Sigmoid colon (tissue), 7 donors: ENCODE measurements at regions of chr5 and their contacts with region 1.

Region 1: DNA sequence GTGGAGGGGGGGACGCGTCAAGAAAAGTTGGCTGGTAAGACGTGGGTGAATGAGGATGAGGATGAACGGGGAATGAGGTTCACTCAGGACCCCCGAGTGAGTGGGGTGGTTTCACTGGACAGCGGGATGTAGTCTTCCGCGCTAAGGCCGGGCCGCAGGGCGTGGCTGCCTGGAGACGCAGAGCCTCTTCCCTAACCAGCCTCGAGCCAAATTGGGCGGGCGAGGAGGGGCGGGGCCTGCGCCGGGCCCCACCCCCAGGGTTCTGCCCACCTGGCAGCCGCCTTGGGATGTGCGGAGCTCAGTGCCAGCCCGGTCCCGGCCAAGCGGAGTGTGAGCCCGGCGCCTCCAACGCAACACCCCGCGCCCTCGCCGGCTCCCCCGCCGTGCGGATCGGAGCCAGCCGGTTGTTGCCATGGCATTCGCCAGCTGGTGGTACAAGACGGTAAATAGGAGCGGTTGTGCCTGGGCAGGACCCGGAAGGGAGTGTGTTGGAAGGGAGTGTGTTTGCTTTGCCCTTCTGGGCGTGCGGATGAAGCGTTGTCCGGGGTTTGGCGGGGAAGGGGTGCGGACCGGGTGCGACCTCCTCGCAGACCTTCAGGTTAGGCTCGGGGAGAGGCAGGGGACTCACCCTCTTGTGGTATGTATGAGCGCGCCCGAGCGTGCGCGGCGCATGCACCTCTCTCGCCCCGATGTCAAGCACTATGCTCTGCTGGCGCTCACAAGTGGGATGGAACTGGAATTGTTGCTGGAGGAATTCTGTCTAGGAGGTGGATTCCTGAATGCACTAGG is 743 bp downstream of the CAST start:
- DNase-seq: peak; percentile 97
- H3K4me3 ChIP-seq: peak overlapping the region; percentile 92 to 98 (median 94)
- H3K27ac ChIP-seq: peak overlapping the region; percentile 99 to 100 (median 100)
- H3K4me1 ChIP-seq: peaks cover 0 to 44% (median 19%) of the 10 kb centered on the region in 4 donors
- H3K27me3 ChIP-seq: no peaks in the 10 kb centered on the region
- CTCF ChIP-seq: no peak
- EP300 ChIP-seq: no peak
- POLR2A ChIP-seq: peak; percentile 65 to 81

Region 2: GRCh38 chr5:96702503-96703383 is 39.8 kb after region 1 on chr5:
- intact Hi-C with region 1: loop called (anchors 2 kb)
- DNase-seq: peak; percentile 98
- H3K4me3 ChIP-seq: peak overlapping the region; percentile 57 to 69 (median 63)
- H3K27ac ChIP-seq: peak overlapping the region; percentile 88 to 93 (median 90)
- H3K4me1 ChIP-seq: peaks cover 0 to 32% (median 20%) of the 10 kb centered on the region in 4 donors
- H3K27me3 ChIP-seq: no peaks in the 10 kb centered on the region
- CTCF ChIP-seq: no peak
- EP300 ChIP-seq: peak in 3 of 4 donors; percentile 37 to 95 (median 69)
- POLR2A ChIP-seq: peak; percentile 63 to 71

Region 3: DNA sequence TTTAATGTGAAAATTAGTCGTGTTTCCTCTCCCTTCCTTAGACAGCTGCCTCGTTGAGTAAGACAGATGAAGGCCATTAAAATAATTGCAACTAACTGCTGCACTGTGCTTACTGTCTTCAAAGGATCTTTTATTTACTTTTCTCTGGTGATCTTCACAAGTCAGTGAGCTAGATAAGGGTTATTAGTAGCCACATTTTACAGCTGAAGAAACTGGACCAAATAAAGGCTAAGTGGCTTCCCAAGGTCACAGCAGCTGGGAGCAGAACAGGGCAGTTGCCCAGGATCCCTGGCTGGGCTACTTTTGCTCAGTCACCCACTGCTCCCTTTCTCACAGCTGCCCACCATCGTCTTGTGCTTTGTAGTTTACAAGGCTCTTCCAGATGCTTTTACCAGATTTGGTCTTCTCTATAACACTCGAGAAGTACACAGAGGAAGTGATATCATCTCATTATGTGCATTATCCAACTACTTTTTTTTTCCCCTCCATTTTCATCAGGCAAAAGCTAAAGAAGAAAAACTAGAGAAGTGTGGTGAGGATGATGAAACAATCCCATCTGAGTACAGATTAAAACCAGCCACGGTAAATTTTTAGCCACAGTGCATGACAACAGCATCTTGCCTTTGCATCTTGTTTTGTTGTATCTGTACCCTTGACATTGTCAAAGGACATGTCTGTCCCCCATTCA is 83.1 kb after region 1 on chr5:
- intact Hi-C with region 1: loop called (anchors 5 kb)
- DNase-seq: no peak
- H3K4me3 ChIP-seq: no peak overlapping the region
- H3K27ac ChIP-seq: peak overlapping the region in 3 of 4 donors; percentile 37 to 67 (median 66)
- H3K4me1 ChIP-seq: peaks cover 0 to 54% (median 34%) of the 10 kb centered on the region in 4 donors
- H3K27me3 ChIP-seq: no peaks in the 10 kb centered on the region
- CTCF ChIP-seq: no peak
- EP300 ChIP-seq: no peak
- POLR2A ChIP-seq: no peak

Region 4: DNA sequence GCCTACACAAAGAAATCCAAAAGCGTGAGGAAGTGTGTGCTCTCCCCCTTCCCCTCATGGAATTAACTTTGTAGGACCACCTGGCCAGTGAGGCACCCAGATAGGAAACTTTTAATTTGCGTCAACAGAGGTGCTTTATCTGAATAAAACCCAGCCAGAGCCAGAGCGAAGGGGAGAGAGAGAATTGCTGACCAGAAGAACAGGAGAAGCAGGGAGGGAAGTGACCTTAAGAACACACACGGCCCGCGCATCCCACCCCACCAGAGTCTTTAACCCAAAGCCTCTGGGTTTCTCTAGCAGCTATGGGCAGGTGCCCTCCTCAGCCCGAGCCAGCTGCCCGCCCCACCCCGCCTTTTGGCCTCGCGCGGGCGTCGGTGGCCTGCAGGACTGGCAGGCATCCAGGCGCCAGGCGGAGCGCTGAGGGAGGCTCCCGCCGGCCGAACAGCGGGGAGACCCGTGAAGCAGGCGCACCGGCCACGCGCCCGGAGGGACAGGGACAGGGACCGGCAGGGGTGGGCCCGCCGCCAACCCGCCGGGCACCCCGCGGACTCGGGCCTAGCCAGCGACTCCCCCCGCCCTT is 144.2 kb after region 1 on chr5:
- intact Hi-C with region 1: loop called (anchors 2 kb)
- DNase-seq: peak; percentile 89
- H3K4me3 ChIP-seq: peak overlapping the region; percentile 69 to 99 (median 92)
- H3K27ac ChIP-seq: peak overlapping the region; percentile 93 to 100 (median 98)
- H3K4me1 ChIP-seq: peaks cover 0 to 30% (median 19%) of the 10 kb centered on the region in 4 donors
- H3K27me3 ChIP-seq: no peaks in the 10 kb centered on the region
- CTCF ChIP-seq: no peak
- EP300 ChIP-seq: no peak
- POLR2A ChIP-seq: no peak

Region 5: DNA sequence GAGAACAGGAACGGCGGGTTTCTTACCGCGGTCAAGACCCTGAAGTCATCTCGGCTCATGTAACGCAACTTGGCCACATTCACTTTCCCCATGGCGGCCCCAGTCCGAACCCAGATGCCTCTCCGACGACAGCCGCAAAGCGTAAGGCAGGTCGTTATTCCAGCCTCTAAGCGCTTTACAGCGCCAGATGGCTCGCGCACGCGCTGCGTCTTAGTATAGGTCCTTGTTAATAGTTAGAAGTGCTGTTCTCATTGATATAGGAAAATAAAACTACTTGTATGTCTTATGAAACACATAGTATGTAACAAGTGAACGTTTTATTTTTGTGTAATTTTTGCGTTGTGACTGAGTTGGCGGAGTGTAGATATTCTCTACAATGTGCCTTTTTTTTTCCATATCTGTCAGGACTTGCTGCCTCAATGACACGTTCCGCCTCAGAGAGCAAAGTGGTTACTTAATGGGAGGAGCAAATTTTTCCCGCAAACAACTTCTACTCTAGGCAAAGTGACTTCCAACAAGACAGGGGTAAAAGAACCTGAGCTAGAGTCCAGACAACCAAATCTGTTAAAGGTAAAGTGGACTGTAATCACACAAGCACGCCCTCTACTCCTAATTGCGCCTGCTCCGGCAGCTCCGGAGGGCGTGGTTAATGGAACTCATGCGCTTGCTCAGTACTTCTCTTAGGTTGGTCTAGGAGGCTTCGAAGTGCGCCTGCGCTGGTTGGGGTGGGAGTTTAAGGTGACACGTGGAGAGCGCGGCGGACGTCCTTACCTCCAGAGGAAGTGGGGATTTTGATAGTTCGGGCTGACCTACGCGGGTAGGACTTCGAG is 520.4 kb after region 1 on chr5 and contains the start of gene RIOK2:
- intact Hi-C with region 1: loop called (anchors 5 kb)
- DNase-seq: peak; percentile 95
- H3K4me3 ChIP-seq: peak within 1 kb of the TSS; percentile 64 to 86 (median 78)
- H3K27ac ChIP-seq: peak within 1 kb of the TSS; percentile 87 to 90 (median 89)
- H3K4me1 ChIP-seq: peaks cover 0 to 31% (median 18%) of the 10 kb centered on the region in 4 donors
- H3K27me3 ChIP-seq: no peaks in the 10 kb centered on the region
- CTCF ChIP-seq: no peak
- EP300 ChIP-seq: no peak
- POLR2A ChIP-seq: peak; percentile 47 to 54
- total RNA-seq, gene RIOK2: 16.1 to 28.0 (median 23.0) TPM